ENCODE measurements at regions of chr20 and their contacts with region 1.

Region 1: DNA sequence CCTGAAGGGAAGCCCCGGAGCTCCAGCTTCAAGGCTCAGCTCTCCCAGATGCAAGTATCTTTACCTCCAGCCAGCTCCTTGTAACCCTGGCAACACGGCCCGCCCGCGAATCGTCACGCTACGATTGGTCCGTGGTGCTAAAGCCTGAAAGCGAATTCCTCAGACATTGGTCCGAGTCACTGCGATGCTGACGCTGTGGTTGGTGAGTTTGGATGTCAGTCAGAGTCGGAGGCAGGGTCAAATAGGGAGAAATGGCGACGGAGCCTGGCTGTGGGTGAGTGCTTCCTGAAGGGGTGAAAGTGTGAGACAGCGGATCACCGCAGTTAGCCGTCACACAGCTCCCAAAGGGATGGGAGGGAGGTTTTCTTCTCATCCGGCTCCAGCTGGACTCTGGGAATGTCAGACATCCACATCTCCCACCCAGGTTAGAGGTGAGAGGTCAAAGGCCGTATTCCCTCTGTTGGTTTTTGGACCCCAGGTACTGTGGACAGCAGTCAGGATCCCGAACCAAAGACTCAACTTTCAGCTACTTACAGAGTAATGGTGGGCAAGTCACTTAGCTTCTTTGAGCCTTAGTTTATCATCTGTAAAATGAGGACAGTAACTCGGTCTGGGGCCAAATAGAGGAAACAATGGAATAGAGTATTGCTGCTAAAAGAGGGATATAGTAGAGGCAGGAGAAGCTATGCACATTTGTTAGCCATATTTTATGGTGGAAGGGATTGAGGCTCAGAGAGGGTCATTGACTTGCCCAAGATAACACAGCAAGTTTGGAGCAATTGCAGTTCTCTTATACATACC is at the start of gene ZSWIM1:
- DNase-seq: peak; percentile 100
- H3K4me3 Mint-ChIP-seq: peak within 1 kb of the TSS; percentile 92
- H3K27ac Mint-ChIP-seq: peak within 1 kb of the TSS; percentile 82
- H3K4me1 Mint-ChIP-seq: peaks cover 33% of the 10 kb centered on the region
- H3K27me3 Mint-ChIP-seq: no peaks in the 10 kb centered on the region
- total RNA-seq, gene ZSWIM1: 9.4 and 10.4 TPM in 2 replicates

Region 2: DNA sequence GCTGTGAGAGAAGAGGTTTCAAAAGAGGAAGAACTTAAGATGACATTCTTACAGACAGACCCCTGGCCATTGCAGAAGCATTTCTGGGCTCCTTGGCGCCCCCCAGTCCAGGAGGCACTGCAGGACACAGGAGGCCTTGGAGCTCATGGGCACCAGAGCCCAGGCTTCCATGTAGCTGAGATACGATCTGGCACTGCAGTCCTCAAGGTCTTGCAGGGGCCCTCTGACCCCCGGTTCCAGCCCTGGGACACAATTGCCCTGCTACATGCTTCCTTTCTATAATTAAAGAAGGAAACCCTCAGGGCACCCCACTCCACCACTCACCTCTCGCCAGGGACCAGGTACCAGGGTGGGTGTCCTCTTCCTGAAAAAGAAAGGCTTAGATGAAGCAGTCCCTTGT is 123.1 kb before region 1 on chr20:
- intact Hi-C with region 1: no loop called
- DNase-seq: no peak
- H3K4me3 Mint-ChIP-seq: no peak overlapping the region
- H3K27ac Mint-ChIP-seq: no peak overlapping the region
- H3K4me1 Mint-ChIP-seq: peaks cover 2% of the 10 kb centered on the region
- H3K27me3 Mint-ChIP-seq: peaks cover 9% of the 10 kb centered on the region

Region 3: GRCh38 chr20:45812157-45813020 is 68.8 kb before region 1 on chr20 and contains the start of gene UBE2C:
- intact Hi-C with region 1: loop called (anchors 5 kb)
- DNase-seq: peak; percentile 98
- H3K4me3 Mint-ChIP-seq: peak within 1 kb of the TSS; percentile 89
- H3K27ac Mint-ChIP-seq: peak within 1 kb of the TSS; percentile 90
- H3K4me1 Mint-ChIP-seq: peaks cover 27% of the 10 kb centered on the region
- H3K27me3 Mint-ChIP-seq: no peaks in the 10 kb centered on the region
- total RNA-seq, gene UBE2C: 113 and 115 TPM in 2 replicates

Region 4: GRCh38 chr20:45890985-45891983 is 10.1 kb after region 1 on chr20 and contains the starts of genes CTSA and NEURL2:
- intact Hi-C with region 1: loop called (anchors 1 kb)
- DNase-seq: peak; percentile 96
- H3K4me3 Mint-ChIP-seq: peak within 1 kb of the TSS; percentile 95
- H3K27ac Mint-ChIP-seq: peak within 1 kb of the TSS; percentile 92
- H3K4me1 Mint-ChIP-seq: peaks cover 17% of the 10 kb centered on the region
- H3K27me3 Mint-ChIP-seq: no peaks in the 10 kb centered on the region
- total RNA-seq, gene CTSA: 48.7 and 50.8 TPM in 2 replicates
- total RNA-seq, gene NEURL2: 2.0 and 2.4 TPM in 2 replicates